Transverse colon (tissue), 4 donors: ENCODE measurements at regions of chr15 and their contacts with region 1.

Region 1: GRCh38 chr15:58770857-58771620 is at the start of gene MINDY2:
- DNase-seq: peak; percentile 98
- H3K4me3 ChIP-seq: peak within 1 kb of the TSS; percentile 82 to 97 (median 92)
- H3K27ac ChIP-seq: peak within 1 kb of the TSS; percentile 97 to 99 (median 98)
- H3K4me1 ChIP-seq: peaks cover 17 to 47% (median 27%) of the 10 kb centered on the region in 4 donors
- H3K27me3 ChIP-seq: no peaks in the 10 kb centered on the region
- CTCF ChIP-seq: peak in 4 of 5 experiments; percentile 23 to 60 (median 32)
- EP300 ChIP-seq: no peak
- POLR2A ChIP-seq: peak; percentile 94
- total RNA-seq, gene MINDY2: 7.4 to 13.9 (median 12.0) TPM

Region 2: DNA sequence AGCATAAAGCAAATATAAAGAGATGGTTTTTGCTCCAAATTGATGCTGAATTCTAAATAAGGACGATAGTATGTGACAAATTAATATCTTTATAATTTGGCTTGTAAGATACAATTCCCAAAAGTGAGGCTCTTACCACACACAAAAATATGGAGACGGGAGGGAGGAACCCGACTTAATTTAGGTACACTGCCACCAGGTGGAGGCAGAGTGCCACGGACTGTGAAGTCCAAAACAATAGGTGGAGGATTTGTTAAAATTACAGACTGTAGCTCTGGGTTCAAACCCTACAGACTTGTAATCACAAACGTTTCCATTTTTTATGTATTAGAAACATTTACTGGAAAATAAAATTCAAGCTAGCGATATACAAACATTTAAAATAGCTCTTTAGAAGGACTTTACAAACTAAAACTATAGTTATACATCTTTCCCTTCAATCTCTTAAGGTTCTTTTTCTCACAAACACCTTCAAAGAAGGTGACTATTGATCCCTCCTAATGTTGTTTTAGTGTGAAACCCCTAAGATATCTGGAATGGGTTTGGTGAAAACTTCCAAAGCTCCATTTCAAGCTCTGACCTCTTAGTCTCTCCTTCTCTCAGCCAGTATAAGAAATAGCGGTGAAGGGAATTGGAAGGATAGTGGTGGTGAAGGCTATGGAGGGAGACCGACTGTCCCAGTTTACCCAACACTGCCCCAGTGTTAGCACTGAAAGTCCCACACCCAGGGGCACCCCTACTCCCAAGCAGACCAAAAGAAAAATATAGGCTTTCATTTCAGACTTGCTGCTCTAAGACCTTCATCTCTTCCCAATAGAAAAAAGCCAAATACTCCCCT is 543.1 kb before region 1 on chr15:
- in situ Hi-C with region 1: loop called in 1 of 4 experiments (anchors 25 kb)
- intact Hi-C with region 1: no loop called
- DNase-seq: peak; percentile 72
- H3K4me3 ChIP-seq: no peak overlapping the region
- H3K27ac ChIP-seq: no peak overlapping the region
- H3K4me1 ChIP-seq: peaks cover 0 to 8% (median 3%) of the 10 kb centered on the region in 4 donors
- H3K27me3 ChIP-seq: no peaks in the 10 kb centered on the region
- CTCF ChIP-seq: peak; percentile 76 to 81 (median 81)
- EP300 ChIP-seq: no peak
- POLR2A ChIP-seq: no peak

Region 3: DNA sequence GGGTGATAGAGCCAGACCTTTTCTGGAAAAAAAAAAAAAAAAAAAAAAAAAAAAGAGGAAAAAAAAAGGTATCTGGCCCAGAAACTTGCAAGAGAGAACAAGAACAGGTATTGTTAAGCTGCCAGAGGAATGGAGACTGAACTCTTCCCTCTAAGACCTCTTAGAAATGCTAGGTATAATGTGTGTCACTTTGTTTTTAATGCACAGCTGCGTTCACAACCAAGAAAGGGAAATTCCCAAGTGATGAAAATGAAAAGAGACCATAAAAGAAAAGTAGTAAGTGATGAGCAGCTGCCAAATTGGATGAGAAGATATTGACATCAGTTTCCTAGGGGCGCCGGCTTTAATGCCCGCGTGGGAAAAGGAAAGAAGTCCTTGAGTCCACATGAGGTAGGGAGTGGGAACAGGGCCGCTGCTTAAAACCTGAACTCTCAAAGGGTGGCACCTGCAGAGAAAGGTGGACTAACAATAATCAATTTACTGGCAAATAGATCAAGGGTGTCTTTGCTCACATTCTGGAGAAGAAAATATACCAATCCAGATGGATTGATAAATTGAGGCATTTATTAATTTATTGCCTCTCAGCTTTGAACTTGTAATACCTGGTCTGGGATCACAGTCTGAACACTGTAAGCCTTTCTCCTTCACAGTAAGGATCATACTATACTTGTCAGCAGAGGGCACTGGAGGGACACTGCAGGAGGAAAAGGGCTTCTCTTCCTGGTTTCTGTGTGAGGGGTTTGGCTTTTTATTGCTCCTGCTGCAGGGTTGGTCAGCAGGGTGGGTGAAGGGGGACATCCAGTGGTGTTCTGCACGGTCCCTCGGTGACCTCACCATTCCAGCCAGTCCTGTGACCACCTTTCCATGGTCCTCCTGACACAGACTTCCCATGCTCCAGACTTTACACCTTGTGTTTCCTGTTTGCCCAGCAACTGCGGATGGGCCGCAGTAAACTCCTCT is 501.3 kb before region 1 on chr15:
- in situ Hi-C with region 1: loop called in 1 of 4 experiments (anchors 25 kb)
- intact Hi-C with region 1: no loop called
- DNase-seq: peak; percentile 24
- H3K4me3 ChIP-seq: no peak overlapping the region
- H3K27ac ChIP-seq: peak overlapping the region in 3 of 4 donors; percentile 27 to 57 (median 41)
- H3K4me1 ChIP-seq: no peaks in the 10 kb centered on the region
- H3K27me3 ChIP-seq: no peaks in the 10 kb centered on the region
- CTCF ChIP-seq: peak; percentile 45 to 81 (median 62)
- EP300 ChIP-seq: no peak
- POLR2A ChIP-seq: no peak

Region 4: DNA sequence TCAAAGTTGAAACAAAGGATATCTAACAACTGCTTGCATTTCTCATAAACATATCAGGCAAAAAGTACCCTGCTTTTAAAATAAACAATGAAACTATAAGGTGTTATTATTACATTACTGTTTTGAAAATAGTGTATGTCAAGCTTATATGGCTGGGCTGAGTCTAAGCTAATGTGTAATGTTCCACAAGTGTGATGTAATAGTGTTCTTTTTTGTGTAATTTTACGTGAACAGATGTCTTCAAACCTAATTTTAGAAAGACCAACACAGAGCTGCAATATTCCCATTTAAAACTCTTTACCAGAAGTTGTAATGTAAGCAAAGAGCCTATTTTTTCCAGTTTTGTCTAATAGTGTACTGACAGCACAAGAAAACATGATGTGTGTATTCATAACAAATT is 34.1 kb after region 1 on chr15:
- in situ Hi-C with region 1: no loop called
- intact Hi-C with region 1: no loop called
- DNase-seq: no peak
- H3K4me3 ChIP-seq: no peak overlapping the region
- H3K27ac ChIP-seq: no peak overlapping the region
- H3K4me1 ChIP-seq: no peaks in the 10 kb centered on the region
- H3K27me3 ChIP-seq: no peaks in the 10 kb centered on the region
- CTCF ChIP-seq: no peak
- EP300 ChIP-seq: no peak
- POLR2A ChIP-seq: no peak

Region 5: DNA sequence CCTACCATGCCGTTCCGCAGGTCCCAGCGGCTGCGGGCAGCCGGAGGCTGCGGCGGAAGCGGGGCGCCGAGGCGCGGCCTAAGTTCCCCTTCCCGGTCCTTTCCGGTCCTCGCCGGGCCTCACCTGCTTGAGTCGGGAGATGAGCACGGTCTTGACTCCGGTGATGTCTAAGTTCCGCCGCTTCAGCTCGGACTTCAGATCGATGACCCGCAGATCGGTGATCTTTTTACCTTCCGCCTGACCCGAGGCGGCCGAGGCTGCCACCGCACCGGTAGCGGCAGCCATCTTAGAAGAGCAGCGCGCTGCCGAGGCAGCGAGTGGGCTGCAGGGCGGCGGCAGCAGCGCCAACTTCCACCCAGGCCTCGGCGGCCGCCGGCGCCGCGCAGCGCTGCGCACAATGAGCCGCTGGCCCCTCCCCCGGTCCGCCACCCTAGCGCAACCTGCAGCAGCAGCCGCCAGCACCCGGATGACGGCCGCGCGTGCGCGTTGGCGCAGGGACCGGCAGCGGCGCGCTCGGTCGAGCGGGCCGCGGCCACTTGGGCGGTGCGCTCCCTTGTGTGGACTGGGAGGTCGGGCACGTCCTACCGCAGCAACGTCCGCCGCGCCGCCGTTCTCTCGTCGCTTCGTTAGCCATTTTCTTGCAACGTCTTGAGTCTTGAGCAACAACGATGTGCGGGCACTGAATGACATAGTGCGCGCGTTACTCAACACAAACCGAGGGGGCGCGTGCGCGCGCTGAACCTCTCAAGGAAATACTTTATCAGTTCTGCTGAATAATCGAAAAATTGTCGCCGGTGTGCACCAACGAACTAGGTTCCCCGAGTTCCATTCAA is 162.5 kb after region 1 on chr15 and contains the start of gene SLTM:
- in situ Hi-C with region 1: no loop called
- intact Hi-C with region 1: loop called (anchors 1 kb)
- DNase-seq: peak; percentile 95
- H3K4me3 ChIP-seq: peak within 1 kb of the TSS; percentile 74 to 96 (median 88)
- H3K27ac ChIP-seq: peak within 1 kb of the TSS; percentile 97 to 100 (median 100)
- H3K4me1 ChIP-seq: peaks cover 12 to 32% (median 20%) of the 10 kb centered on the region in 4 donors
- H3K27me3 ChIP-seq: no peaks in the 10 kb centered on the region
- CTCF ChIP-seq: peak; percentile 20 to 69 (median 45)
- EP300 ChIP-seq: no peak
- POLR2A ChIP-seq: peak; percentile 98
- total RNA-seq, gene SLTM: 91.9 to 447 (median 143) TPM